ENCODE measurements at regions of chr11 and their contacts with region 1.

Region 1: DNA sequence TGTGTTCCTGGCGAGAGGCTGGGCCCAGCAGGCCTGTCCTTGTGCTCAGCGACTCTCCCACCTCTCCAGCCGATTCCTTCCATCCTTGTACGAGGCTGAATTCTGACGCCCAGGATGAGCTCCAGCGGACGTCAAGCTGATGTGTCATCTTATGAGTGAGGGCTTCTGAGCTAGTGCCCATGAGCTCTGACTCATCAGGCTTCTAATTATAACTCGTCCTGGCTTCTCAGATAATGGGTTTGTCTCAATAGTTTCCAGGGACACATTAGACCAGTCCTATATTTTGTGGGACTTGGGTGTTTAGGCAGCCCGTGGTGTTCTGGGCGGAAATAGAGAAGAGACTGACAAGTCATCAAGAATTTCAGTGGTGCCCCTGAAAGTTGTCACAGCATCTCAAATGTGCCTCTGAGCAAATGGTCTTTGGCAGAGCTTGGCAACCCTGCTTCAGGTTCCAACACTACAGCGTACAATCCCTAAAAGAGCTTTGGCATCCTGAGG is 108.2 kb upstream of the CD44 start:
- DNase-seq: no peak
- H3K4me3 Mint-ChIP-seq: peak overlapping the region; percentile 75
- H3K27ac Mint-ChIP-seq: peak overlapping the region; percentile 88
- H3K4me1 Mint-ChIP-seq: peaks cover 50% of the 10 kb centered on the region
- H3K27me3 Mint-ChIP-seq: peaks cover 8% of the 10 kb centered on the region

Region 2: GRCh38 chr11:35057926-35058668 is 27.3 kb after region 1 on chr11:
- intact Hi-C with region 1: loop called (anchors 2 kb)
- DNase-seq: no peak
- H3K4me3 Mint-ChIP-seq: peak overlapping the region; percentile 8
- H3K27ac Mint-ChIP-seq: no peak overlapping the region
- H3K4me1 Mint-ChIP-seq: peaks cover 30% of the 10 kb centered on the region
- H3K27me3 Mint-ChIP-seq: no peaks in the 10 kb centered on the region

Measured in activated T-helper 1 cell treated with anti-CD3 and anti-CD28 coated beads, Interleukin-12 subunit alpha, Interleukin-12 subunit beta, Interleukin-2, Interleukin-4 antibody, amounts not matched to agents 30 ng/mL and 10 ng/mL and 1 ng/mL, durations not matched to agents 14 hours and 24 hours and 36 hours (primary cell).